GM10248 (cell line): ENCODE measurements at regions of chr11 and their contacts with region 1.

Region 1: DNA sequence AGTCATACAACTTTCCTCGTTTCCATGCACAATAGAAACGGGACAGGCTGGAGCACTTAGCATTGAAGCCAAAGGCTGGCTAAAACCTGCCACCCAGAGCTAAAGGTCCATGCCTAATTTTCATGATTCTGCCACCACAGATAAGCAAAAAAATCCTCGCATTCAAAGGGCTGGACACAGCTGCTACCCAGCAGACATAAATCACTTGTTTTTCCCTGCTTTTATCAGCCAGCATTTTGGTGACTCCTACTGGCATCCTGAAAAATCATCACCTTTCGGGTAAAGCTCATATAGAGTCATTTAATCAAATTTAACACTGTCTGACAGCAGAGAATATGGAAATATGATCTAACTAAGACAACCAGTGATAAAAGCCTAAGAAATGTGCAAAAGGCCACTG is 37.9 kb downstream of the ALG9 start:
- DNase-seq: no peak
- CTCF ChIP-seq: no peak

Region 2: DNA sequence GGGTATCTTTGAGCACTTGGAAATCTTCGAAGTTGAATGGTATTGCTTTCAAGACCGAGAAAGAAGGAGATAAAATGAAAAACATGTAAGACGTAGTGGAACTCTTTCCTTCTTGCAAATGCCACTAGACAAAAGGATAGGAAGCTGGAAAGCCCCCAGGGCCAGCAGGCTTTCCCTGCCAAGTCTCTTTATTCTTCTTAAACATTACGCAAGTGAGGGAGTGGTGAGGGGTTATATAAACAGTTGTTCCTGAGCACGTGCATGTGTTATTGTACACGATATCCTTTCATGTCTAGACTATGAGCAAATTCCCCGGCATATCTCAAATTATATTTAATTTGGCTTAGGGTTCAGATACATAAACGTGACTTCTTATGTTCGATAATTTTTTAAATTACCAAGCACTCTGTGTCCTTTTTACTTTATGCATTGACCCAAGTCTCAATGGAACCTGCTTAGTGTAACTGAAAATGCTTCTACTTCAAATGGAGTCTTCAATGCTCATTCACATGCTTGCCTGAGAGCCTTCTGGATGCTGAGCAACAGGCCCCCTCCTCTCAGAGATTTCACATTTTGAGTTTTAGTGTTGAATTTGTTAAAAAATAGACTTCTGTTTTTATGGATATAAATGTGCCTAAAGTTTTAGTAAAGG is 126.4 kb before region 1 on chr11:
- CTCF ChIA-PET with region 1: no interaction called
- POLR2A ChIA-PET with region 1: no interaction called
- DNase-seq: no peak
- CTCF ChIP-seq: no peak

Region 3: GRCh38 chr11:111846636-111847035 is 13.1 kb after region 1 on chr11:
- CTCF ChIA-PET with region 1: interaction called, 27 read pairs
- POLR2A ChIA-PET with region 1: no interaction called
- DNase-seq: no peak
- CTCF ChIP-seq: no peak

Region 4: GRCh38 chr11:112555491-112556364 is 722.2 kb after region 1 on chr11:
- CTCF ChIA-PET with region 1: no interaction called
- POLR2A ChIA-PET with region 1: no interaction called
- DNase-seq: peak; percentile 55
- CTCF ChIP-seq: peak; percentile 54